ENCODE measurements at regions of chr17 and their contacts with region 1.

Region 1: GRCh38 chr17:32370426-32370825 is 20.5 kb downstream of the ZNF207 start:
- DNase-seq: no peak
- H3K4me3 Mint-ChIP-seq: no peak overlapping the region
- H3K27ac Mint-ChIP-seq: no peak overlapping the region
- H3K4me1 Mint-ChIP-seq: peaks cover 40% of the 10 kb centered on the region
- H3K27me3 Mint-ChIP-seq: no peaks in the 10 kb centered on the region

Region 2: DNA sequence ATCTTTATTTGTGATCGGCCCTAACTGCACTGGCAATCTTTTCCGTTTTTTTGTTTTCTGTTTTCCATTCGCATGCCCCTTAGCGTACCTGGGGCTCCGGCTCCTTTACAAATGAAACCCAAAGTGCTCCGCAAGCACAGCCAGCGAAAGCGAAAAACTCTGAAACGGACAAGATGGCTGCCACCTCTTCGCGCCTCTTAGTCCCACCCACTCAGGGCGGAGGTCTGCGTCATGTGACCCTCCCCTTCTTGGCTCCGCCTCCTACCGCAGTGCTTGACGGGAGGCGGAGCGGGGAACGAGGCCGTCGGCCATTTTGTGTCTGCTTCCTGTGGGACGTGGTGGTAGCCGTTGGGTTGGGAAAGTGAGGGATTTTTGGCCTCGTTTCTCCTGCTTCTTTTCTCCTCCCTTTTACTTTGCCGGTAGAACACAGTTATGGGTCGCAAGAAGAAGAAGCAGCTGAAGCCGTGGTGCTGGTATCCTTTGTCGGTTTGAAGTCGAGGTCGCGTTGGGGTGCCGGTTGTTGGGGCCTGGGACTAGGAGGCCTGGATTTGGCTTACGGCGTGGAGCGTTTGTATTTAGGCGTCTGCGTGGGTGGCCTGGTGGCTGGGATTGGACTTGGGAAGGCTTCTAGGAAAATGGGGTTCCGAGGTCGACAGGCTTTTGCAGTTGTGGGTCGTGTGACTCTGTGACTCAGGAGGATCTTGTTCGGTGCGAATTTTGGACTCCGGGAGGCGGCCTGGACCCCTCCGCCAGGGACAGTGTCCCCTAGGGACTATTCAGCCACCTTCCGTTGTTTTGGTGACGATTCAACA is 20.4 kb before region 1 on chr17 and contains the start of gene ZNF207:
- CTCF ChIA-PET with region 1: no interaction called
- POLR2A ChIA-PET with region 1: interaction called, 13 read pairs
- DNase-seq: peak; percentile 96
- H3K4me3 Mint-ChIP-seq: peak within 1 kb of the TSS; percentile 97
- H3K27ac Mint-ChIP-seq: peak within 1 kb of the TSS; percentile 99
- H3K4me1 Mint-ChIP-seq: peaks cover 38% of the 10 kb centered on the region
- H3K27me3 Mint-ChIP-seq: no peaks in the 10 kb centered on the region
- total RNA-seq, gene ZNF207: 238 to 257 TPM

Region 3: GRCh38 chr17:32357615-32358014 is 12.8 kb before region 1 on chr17:
- CTCF ChIA-PET with region 1: no interaction called
- POLR2A ChIA-PET with region 1: interaction called, 10 read pairs
- DNase-seq: no peak
- H3K4me3 Mint-ChIP-seq: no peak overlapping the region
- H3K27ac Mint-ChIP-seq: no peak overlapping the region
- H3K4me1 Mint-ChIP-seq: peaks cover 62% of the 10 kb centered on the region
- H3K27me3 Mint-ChIP-seq: no peaks in the 10 kb centered on the region

Region 4: GRCh38 chr17:32449963-32450362 is 79.5 kb after region 1 on chr17:
- CTCF ChIA-PET with region 1: no interaction called
- POLR2A ChIA-PET with region 1: no interaction called
- DNase-seq: no peak
- H3K4me3 Mint-ChIP-seq: no peak overlapping the region
- H3K27ac Mint-ChIP-seq: no peak overlapping the region
- H3K4me1 Mint-ChIP-seq: peaks cover 41% of the 10 kb centered on the region
- H3K27me3 Mint-ChIP-seq: no peaks in the 10 kb centered on the region